ENCODE measurements at regions of chr5 and their contacts with region 1.

Region 1: DNA sequence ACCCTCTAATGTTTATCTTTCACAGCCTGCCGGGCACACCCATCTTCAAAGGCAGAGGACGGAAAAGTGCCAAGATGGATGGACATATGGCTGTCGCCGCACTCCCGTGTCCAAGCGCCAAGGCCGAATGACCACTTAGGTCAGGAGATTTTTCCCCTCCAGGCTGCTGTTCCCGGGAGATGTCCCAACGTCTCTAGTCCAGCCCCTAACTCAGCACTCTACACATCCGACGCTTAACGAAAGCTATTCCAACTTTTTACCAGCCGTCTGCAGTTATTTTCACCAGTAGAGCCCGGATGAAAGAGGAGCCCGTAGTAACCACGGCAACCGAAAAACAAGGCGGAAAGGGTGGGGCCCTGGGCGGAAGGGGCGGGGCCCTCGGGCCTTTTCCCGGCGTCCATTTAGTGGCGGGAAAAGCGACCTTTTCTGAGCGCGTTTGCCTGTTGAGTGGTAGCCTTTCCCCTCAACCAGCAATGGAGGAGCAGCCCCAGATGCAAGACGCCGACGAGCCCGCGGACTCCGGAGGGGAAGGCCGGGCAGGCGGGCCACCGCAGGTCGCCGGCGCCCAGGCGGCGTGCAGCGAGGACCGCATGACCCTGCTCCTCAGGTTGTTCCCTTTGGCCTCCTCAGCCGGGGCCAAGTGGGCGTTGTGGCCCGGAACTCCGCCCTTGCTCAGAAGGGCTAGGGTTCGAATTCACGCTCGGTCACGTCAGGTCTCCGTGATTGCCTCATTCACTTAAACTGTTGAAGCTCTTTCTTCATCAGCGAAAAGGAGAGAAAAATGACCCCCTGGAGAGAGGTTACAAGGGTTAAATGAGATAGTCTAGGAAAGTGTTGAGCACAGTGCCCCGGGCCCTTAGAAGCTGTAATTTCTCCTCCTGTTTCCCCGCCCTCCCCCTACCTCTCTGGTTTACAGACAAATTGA is at the start of gene CENPH:
- DNase-seq: peak; percentile 91
- ATAC-seq: peak; percentile 83
- H3K4me3 ChIP-seq: peak within 1 kb of the TSS; percentile 82
- H3K27ac ChIP-seq: peak within 1 kb of the TSS; percentile 86
- H3K4me1 ChIP-seq: no peaks in the 10 kb centered on the region
- H3K27me3 ChIP-seq: no peaks in the 10 kb centered on the region
- CTCF ChIP-seq: no peak
- total RNA-seq, gene CENPH: 22.1 and 27.8 TPM in 2 replicates

Region 2: GRCh38 chr5:69129413-69129812 is 60.0 kb before region 1 on chr5:
- CTCF ChIA-PET with region 1: no interaction called
- POLR2A ChIA-PET with region 1: no interaction called
- intact Hi-C with region 1: loop called (anchors 10 kb)
- DNase-seq: peak; percentile 64
- ATAC-seq: peak; percentile 59
- H3K4me3 ChIP-seq: no peak overlapping the region
- H3K27ac ChIP-seq: no peak overlapping the region
- H3K4me1 ChIP-seq: peaks cover 7% of the 10 kb centered on the region; the same call in 1 of the 2 replicates
- H3K27me3 ChIP-seq: no peaks in the 10 kb centered on the region
- CTCF ChIP-seq: no peak

Region 3: DNA sequence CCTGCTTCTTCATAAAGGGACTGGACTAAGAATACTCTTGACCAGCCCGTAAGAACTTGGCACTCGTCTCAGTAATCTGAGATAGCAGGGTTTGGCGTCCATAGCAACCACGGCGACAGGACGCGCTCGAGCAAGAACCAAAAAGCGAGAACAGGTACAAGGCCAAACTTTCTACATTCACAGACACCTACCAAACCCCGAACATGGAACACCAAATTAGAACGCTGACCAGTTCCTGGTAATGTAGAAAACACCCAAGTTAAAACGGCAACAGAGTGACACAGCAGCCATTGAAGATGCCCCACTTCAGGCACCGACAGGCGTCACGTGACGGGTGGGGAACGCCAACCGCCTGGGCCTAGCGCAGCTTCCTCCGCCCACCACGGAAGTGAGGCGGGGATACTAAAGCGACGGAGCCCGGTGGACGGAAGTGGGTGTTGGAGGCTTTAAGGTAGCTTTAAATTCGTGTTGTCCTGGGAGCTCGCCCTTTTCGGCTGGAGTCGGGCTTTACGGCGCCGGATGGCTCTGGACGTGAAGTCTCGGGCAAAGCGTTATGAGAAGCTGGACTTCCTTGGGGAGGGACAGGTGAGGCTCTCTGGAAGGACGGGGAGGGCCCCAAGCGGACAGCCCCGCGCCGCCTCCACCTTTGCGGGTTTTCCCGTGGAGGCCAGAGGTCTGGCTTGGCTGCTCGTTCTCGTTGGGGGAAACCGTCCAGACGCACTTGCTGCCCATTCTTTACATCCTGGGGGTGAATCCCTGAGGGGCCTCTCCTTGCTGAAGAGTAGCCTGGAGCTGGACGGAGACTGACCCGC is 45.2 kb after region 1 on chr5 and contains the start of gene CDK7:
- CTCF ChIA-PET with region 1: no interaction called
- POLR2A ChIA-PET with region 1: no interaction called
- intact Hi-C with region 1: loop called (anchors 1 kb)
- DNase-seq: peak; percentile 91
- ATAC-seq: peak; percentile 91
- H3K4me3 ChIP-seq: peak within 1 kb of the TSS; percentile 90
- H3K27ac ChIP-seq: peak within 1 kb of the TSS; percentile 29; the same call in 1 of the 2 replicates
- H3K4me1 ChIP-seq: peaks cover 33% of the 10 kb centered on the region
- H3K27me3 ChIP-seq: no peaks in the 10 kb centered on the region
- CTCF ChIP-seq: no peak
- total RNA-seq, gene CDK7: 19.9 and 26.6 TPM in 2 replicates